ENCODE measurements at regions of chrX and their contacts with region 1.

Region 1: DNA sequence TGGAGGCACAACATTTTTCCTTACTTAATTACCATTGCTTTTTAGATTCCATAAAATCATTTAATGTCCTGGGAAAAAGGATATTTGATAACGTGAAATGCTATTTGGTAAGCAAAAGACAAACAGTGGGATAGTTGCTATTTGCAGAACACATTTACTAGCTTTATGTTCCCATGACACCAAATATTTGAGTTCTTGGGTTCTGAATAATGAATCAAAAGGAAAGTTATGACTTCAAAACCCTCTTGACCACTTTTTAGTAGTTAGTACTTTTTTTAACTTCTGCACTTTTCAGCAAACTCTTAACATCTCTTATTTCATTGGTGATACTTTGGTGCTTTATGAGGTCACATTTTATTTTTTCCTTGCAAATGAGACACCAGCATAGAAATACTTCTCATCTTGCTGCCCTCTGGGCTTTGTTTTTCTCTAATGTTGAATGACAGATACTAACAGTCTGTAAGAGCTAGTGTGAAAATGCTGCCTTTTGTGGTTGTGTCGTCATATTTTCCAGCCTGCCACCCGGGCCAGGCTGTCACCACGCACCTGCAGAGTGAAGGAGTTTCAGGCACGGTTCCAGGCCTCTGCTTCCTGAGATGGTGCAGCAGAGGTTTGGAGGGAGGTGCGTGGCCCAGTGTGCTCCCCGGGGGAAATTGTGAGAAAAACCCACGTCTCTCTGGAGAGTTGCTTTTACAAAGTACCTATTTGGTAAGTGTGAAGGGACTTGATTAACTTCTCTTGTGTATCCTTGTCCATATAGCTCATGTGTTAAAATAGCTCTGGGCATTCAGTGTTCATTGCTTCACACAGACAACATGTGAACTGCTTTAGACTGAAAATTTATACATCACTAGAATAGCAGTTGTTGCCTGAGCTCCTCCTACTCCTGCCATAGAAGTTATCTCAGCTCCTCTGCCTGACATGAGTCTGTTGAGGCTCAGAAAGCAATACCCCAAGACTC is 34.7 kb downstream of the MSL3 start:
- DNase-seq: peak; percentile 86
- ATAC-seq: peak; percentile 87
- H3K4me3 ChIP-seq: peak overlapping the region; percentile 37; the same call in 1 of the 2 replicates
- H3K27ac ChIP-seq: peak overlapping the region; percentile 61
- H3K4me1 ChIP-seq: peaks cover 31% of the 10 kb centered on the region
- H3K27me3 ChIP-seq: no peaks in the 10 kb centered on the region
- CTCF ChIP-seq: no peak
- EP300 ChIP-seq: peak; percentile 86 to 96
- POLR2A ChIP-seq: 0 out of 2 replicates have a peak, but pooled peaks have one; percentile 27
- RAD21 ChIP-seq: 0 out of 2 replicates have a peak, but pooled peaks have one; percentile 4

Region 2: DNA sequence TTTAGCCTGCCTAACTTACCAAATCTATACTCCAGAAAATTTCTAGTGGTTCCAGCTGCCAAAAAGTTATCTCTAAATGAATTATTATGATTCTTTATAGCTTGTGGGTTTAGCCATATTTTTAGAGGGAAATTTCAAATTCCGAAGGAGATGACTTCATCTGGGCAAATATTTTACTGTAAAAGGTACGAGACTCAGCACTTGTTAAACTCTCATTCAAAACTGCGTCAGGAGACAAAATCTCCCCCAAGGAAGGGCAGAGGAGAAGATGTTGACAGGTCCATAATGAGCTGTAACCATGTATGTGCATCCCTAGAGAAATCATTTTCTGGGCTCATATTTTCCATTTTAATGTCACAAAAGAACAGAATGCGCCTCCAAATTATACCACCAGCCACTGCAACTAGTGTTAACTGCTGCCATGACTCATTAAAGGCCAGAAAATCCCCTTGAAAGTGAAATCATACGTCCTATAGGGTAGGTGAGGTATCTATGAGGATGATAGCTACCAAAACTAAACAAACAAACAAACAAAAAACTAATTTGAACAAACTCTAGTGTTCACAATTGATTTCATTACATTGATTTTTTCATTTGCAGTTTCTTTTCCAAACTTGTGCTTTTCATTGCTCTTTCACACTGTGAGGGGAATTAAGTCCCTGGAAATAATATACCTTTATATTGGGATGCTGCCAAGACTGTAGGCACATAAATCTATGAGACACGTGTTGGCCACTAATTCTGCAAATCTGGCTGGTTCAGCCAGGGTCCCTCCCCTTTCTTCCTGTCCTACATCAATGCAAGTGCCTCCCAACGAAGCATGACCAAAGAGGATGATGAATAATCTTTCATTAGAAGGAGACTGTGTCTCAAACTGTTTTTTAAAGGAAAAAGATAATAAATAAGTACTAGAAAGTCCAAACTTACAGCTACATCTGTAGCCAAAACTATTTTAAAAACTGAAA is 212.8 kb before region 1 on chrX:
- CTCF ChIA-PET with region 1: interaction called, 5 read pairs
- POLR2A ChIA-PET with region 1: no interaction called
- RAD21 ChIA-PET with region 1: interaction called, 23 read pairs
- SMC1A ChIA-PET with region 1: interaction called, 7 read pairs
- in situ Hi-C with region 1: no loop called
- intact Hi-C with region 1: no loop called
- DNase-seq: no peak
- ATAC-seq: peak; percentile 81
- H3K4me3 ChIP-seq: no peak overlapping the region
- H3K27ac ChIP-seq: no peak overlapping the region
- H3K4me1 ChIP-seq: no peaks in the 10 kb centered on the region
- H3K27me3 ChIP-seq: no peaks in the 10 kb centered on the region
- CTCF ChIP-seq: no peak
- EP300 ChIP-seq: no peak
- POLR2A ChIP-seq: no peak
- RAD21 ChIP-seq: no peak

Region 3: GRCh38 chrX:11758400-11759171 is 34.2 kb before region 1 on chrX:
- CTCF ChIA-PET with region 1: interaction called, 8 read pairs
- POLR2A ChIA-PET with region 1: interaction called, 207 read pairs
- RAD21 ChIA-PET with region 1: interaction called, 428 read pairs
- SMC1A ChIA-PET with region 1: interaction called, 404 read pairs
- in situ Hi-C with region 1: no loop called
- intact Hi-C with region 1: no loop called
- DNase-seq: no peak
- ATAC-seq: peak; percentile 44
- H3K4me3 ChIP-seq: peak overlapping the region; percentile 60
- H3K27ac ChIP-seq: peak overlapping the region; percentile 90
- H3K4me1 ChIP-seq: peaks cover 7% of the 10 kb centered on the region; the same call in 1 of the 2 replicates
- H3K27me3 ChIP-seq: no peaks in the 10 kb centered on the region
- CTCF ChIP-seq: peak; percentile 34 to 68 (median 59); a peak in 4 of 6 replicates
- EP300 ChIP-seq: peak in 1 of 2 experiments; percentile 10; a peak in 1 of 4 replicates
- POLR2A ChIP-seq: no peak; the same call in 1 of the 2 replicates
- RAD21 ChIP-seq: peak; percentile 43

Region 4: DNA sequence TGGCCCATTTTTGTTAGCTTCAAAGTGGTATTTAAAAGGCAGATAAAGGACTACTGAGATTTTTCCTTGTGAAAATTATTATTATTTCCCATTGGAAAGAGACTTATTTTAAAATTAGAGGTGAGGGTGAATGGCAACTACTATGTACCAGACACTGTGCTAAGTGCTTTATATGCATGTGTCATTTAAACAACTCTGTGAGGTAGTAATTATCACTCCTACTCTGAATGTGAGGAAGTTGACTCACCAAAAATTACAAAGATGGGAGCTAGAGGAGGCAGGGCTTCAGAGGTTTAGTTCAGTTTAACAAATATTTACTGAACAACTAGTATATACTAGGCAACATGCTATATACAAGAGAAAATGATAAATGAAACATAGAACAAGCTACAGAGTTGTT is 43.5 kb after region 1 on chrX:
- CTCF ChIA-PET with region 1: interaction called, 12 read pairs
- POLR2A ChIA-PET with region 1: interaction called, 3 read pairs
- RAD21 ChIA-PET with region 1: interaction called, 34 read pairs
- SMC1A ChIA-PET with region 1: interaction called, 18 read pairs
- in situ Hi-C with region 1: no loop called
- intact Hi-C with region 1: no loop called
- DNase-seq: no peak
- ATAC-seq: peak; percentile 56
- H3K4me3 ChIP-seq: no peak overlapping the region
- H3K27ac ChIP-seq: no peak overlapping the region
- H3K4me1 ChIP-seq: no peaks in the 10 kb centered on the region
- H3K27me3 ChIP-seq: peaks cover 0 to 2% of the 10 kb centered on the region in 2 experiments; a peak in 1 of 4 replicates
- CTCF ChIP-seq: no peak
- EP300 ChIP-seq: no peak
- POLR2A ChIP-seq: no peak
- RAD21 ChIP-seq: no peak

Region 5: DNA sequence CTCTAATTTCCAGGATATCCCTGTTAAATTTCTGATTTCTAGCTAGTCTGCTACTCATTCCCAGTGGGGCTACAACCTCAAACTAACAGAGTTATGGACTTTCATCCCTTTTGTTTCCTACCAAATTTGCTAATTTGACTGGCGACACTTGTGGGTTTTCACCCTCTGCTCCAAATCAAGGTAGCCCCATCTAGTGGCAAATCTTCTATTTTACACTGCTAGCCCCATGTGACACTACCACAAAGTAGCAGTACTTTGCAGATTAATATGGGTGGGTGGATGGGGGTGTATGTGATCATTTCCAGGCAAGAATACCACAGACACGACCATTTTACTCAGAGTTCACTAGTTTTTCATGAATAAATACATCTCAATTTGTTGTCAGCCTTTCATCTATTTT is 115.6 kb after region 1 on chrX:
- CTCF ChIA-PET with region 1: interaction called, 8 read pairs
- POLR2A ChIA-PET with region 1: no interaction called
- RAD21 ChIA-PET with region 1: interaction called, 14 read pairs
- SMC1A ChIA-PET with region 1: interaction called, 15 read pairs
- in situ Hi-C with region 1: no loop called
- intact Hi-C with region 1: loop called (anchors 2 kb)
- DNase-seq: peak; percentile 25
- ATAC-seq: peak; percentile 99
- H3K4me3 ChIP-seq: no peak overlapping the region
- H3K27ac ChIP-seq: no peak overlapping the region
- H3K4me1 ChIP-seq: no peaks in the 10 kb centered on the region
- H3K27me3 ChIP-seq: no peaks in the 10 kb centered on the region
- CTCF ChIP-seq: peak; percentile 54 to 70 (median 56)
- EP300 ChIP-seq: no peak
- POLR2A ChIP-seq: no peak
- RAD21 ChIP-seq: peak; percentile 71

Region 6: DNA sequence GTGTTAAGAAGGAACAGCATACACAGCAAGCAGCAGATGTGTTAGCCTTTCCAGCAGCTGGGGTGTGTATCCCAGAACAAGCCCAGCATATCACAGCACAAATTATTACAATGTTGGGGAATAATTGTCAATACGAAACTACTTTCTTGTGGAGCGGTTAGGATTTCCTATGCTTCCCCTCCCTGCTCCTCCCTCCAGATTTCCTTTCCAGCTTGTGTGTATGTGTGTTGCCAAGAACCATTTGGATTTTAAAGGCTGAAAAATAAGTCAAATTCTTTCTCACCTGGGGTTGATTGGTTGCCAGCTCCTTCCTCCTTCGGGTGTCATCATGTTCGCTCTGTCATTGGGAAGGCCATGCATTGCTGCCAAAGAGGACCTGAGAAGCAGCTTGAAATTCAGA is 167.3 kb after region 1 on chrX:
- CTCF ChIA-PET with region 1: no interaction called
- POLR2A ChIA-PET with region 1: no interaction called
- RAD21 ChIA-PET with region 1: no interaction called
- SMC1A ChIA-PET with region 1: no interaction called
- in situ Hi-C with region 1: no loop called
- intact Hi-C with region 1: no loop called
- DNase-seq: no peak
- ATAC-seq: no peak
- H3K4me3 ChIP-seq: no peak overlapping the region
- H3K27ac ChIP-seq: no peak overlapping the region
- H3K4me1 ChIP-seq: no peaks in the 10 kb centered on the region
- H3K27me3 ChIP-seq: no peaks in the 10 kb centered on the region
- CTCF ChIP-seq: no peak
- EP300 ChIP-seq: no peak
- POLR2A ChIP-seq: no peak
- RAD21 ChIP-seq: no peak